ENCODE measurements at regions of chr13 and their contacts with region 1.

Region 1: DNA sequence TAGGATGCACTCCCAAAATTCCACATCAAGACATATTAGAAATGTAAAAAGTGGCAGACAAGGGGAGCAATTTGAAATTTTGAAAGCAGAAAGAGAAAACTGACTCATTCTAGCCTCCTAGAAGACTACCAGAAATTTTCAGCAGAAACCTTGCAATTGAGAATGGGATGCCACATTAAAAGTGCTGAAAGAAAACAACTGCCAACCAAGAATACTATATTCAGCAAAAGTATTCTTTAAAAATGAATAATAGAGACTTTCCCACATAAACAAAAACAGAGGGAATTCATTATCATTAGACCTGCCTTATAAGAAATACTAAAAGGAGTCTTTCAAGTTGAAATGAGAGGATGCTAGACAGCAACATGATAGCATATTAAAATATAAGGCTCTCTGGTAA is 78.3 kb upstream of the HTR2A start:
- DNase-seq: no peak
- H3K4me3 ChIP-seq: no peak overlapping the region
- H3K27ac ChIP-seq: no peak overlapping the region
- H3K4me1 ChIP-seq: no peaks in the 10 kb centered on the region
- H3K27me3 ChIP-seq: no peaks in the 10 kb centered on the region
- CTCF ChIP-seq: no peak
- EP300 ChIP-seq: no peak
- POLR2A ChIP-seq: no peak

Region 2: DNA sequence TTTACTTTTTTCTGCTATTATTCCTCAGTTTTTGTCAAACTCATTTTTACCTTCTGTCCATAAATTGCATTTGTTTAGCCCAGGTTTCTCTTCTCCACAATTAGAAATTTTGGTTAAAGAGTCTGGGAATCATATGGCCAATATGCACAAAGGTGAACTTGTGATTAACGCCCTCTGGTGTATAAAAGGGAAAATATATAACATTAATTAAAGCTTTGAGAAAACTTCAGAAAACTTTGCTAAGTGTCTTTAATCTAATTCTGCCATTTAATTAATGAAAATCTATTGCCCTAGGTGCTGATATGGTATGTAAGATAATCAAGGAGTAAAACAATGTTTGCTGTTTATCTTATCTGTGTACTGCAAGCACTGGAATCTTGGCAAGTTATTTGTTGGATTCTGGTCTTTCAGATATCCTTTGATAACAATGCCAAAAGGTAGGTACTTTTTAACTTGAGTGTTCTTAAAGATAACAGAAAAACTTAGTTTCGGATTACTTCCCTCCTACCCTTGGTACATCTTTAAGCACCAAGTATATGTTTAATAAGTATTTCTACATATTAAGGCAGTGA is 623.3 kb after region 1 on chr13:
- intact Hi-C with region 1: loop called (anchors 10 kb)
- DNase-seq: no peak
- H3K4me3 ChIP-seq: no peak overlapping the region
- H3K27ac ChIP-seq: no peak overlapping the region
- H3K4me1 ChIP-seq: no peaks in the 10 kb centered on the region
- H3K27me3 ChIP-seq: no peaks in the 10 kb centered on the region
- CTCF ChIP-seq: peak in 1 of 3 experiments; percentile 21
- EP300 ChIP-seq: no peak
- POLR2A ChIP-seq: no peak

Region 3: DNA sequence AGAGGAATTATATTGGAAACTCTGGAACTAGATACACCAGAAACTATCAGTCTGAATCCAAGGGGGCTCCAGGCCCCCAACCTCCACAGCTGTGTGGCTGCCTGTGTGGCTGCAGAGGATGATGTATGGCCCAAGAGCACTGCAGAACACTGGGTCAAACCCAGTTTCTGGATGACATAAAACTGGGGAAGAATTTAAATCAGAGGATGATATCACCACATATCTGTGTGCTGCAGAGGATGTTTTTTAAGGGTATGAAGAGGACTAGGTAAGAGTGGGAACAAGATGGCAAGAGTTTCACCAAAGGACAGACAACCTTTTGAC is 799.5 kb after region 1 on chr13:
- intact Hi-C with region 1: loop called (anchors 10 kb)
- DNase-seq: no peak
- H3K4me3 ChIP-seq: no peak overlapping the region
- H3K27ac ChIP-seq: no peak overlapping the region
- H3K4me1 ChIP-seq: no peaks in the 10 kb centered on the region
- H3K27me3 ChIP-seq: no peaks in the 10 kb centered on the region
- CTCF ChIP-seq: no peak
- EP300 ChIP-seq: no peak
- POLR2A ChIP-seq: no peak

Measured in esophagus muscularis mucosa (tissue), 4 donors.